GM23248 (cell line): ENCODE measurements at regions of chr21 and their contacts with region 1.

Region 1: DNA sequence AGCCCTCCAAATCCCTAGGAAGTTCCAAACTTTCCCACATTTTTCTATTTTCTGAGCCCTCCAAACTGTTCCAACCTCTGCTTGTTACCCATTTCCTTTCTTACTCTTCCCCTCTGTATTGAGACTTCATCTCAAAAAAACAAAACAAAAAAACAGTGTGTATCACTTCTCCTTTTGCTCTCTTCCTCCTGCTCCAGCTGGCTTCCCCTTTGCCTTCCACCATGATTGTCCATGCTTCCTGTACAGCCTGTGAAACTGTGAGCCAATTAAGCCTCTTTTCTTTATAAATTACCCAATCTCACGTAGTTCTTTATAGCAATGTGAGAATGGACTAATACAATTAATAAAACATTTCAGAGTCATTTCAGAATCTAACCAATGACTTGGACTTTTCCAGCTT is 69.6 kb upstream of the KRTAP19-8 start:
- DNase-seq: no peak
- H3K4me3 ChIP-seq: no peak overlapping the region
- H3K27ac ChIP-seq: no peak overlapping the region
- H3K4me1 ChIP-seq: no peaks in the 10 kb centered on the region; the same call in 1 of the 2 replicates
- H3K27me3 ChIP-seq: no peaks in the 10 kb centered on the region

Region 2: GRCh38 chr21:31180256-31181081 is 72.6 kb after region 1 on chr21:
- in situ Hi-C with region 1: loop called (anchors 5 kb)
- DNase-seq: peak; percentile 68
- H3K4me3 ChIP-seq: no peak overlapping the region
- H3K27ac ChIP-seq: no peak overlapping the region
- H3K4me1 ChIP-seq: no peaks in the 10 kb centered on the region
- H3K27me3 ChIP-seq: no peaks in the 10 kb centered on the region

Region 3: GRCh38 chr21:31498981-31499380 is 391.1 kb after region 1 on chr21:
- in situ Hi-C with region 1: no loop called
- DNase-seq: no peak
- H3K4me3 ChIP-seq: no peak overlapping the region
- H3K27ac ChIP-seq: no peak overlapping the region
- H3K4me1 ChIP-seq: no peaks in the 10 kb centered on the region
- H3K27me3 ChIP-seq: no peaks in the 10 kb centered on the region

Region 4: DNA sequence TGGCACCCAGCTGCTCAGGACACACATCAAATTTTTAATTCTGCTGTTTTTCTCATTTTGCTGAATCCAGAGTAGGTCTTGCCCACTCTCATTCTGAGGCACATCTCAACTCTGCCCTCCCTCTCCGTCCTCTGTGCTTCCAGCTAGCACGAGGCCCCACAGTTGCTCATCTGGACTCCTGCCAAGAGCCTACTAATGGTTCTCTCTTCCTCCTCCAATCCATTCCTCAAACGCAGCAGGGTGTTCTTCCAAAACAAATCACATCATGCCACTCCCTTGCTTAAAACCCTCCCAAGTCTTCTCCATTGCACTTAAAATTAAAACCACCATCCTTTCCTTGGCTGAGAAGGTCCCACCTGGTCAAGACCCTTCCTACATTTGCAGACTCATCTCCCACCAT is 673.9 kb after region 1 on chr21:
- in situ Hi-C with region 1: no loop called
- DNase-seq: peak; percentile 77
- H3K4me3 ChIP-seq: no peak overlapping the region
- H3K27ac ChIP-seq: no peak overlapping the region
- H3K4me1 ChIP-seq: no peaks in the 10 kb centered on the region
- H3K27me3 ChIP-seq: no peaks in the 10 kb centered on the region